Activated naive CD8-positive, alpha-beta T cell treated with anti-CD3 and anti-CD28 coated beads, Interleukin-2, amount 10 ng/mL, durations not matched to agents 7 days and 5 days (primary cell): ENCODE measurements at regions of chr14 and their contacts with region 1.

Region 1: DNA sequence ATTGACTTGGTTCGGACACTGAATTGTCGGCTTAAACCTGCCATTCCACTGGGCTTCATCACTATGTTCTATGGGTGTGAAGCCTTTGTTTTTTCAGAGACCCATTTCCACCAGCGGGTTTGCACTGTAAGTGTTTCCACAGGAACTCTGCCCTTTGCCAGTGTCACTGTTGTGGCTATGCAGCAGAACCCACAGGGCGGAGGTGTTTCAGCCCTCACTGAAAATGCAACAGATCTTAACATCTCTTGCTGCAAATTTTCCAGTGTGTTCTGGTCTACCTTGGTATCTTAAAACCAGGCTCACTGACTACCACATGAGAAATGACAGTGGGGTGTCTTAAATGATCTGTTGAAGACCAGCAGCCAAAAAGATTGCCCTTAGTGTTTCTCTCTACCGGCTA is 21.1 kb downstream of the PRKCH start:
- DNase-seq: peak; percentile 70
- ATAC-seq: peak; percentile 48
- H3K4me3 Mint-ChIP-seq: peak overlapping the region; percentile 84
- H3K27ac Mint-ChIP-seq: peak overlapping the region; percentile 97
- H3K4me1 Mint-ChIP-seq: peaks cover 89% of the 10 kb centered on the region
- H3K27me3 Mint-ChIP-seq: no peaks in the 10 kb centered on the region

Region 2: DNA sequence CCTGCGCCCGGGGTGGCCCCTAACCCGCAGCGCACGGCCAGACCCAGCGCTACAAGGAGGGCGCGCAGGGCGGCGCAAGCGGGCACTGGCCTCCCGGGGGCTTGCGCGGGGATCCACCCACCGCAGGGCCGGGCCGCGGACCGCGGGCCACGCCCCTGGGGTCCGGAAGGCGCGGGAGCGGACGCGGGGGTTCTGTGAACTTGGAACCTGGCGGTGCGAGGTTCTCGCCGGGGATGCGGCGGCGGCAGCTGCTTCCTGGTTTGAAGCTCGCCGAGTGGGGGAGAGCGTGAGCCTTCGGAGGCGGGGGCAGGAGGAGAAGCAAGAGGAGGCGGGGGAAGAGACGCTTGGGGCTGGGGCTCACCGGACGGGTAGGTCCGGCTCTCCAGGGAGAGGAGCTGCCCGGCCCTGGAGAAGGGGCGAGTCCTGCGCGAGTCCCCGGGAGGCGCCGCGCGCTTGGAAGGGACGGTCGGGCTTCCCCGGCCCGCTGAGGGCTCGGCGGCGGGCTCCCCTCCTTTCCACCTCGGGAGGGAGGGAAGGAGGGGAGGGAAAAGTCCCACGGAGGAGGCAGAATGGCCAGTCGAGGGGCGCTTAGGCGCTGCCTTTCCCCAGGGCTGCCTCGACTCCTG is 21.0 kb before region 1 on chr14 and contains the start of gene PRKCH:
- POLR2A ChIA-PET with region 1: interaction called, 188 read pairs
- DNase-seq: peak; percentile 87
- ATAC-seq: peak; percentile 75
- H3K4me3 Mint-ChIP-seq: peak within 1 kb of the TSS; percentile 99
- H3K27ac Mint-ChIP-seq: peak within 1 kb of the TSS; percentile 96
- H3K4me1 Mint-ChIP-seq: peaks cover 11% of the 10 kb centered on the region
- H3K27me3 Mint-ChIP-seq: no peaks in the 10 kb centered on the region
- total RNA-seq, gene PRKCH: 318 TPM

Region 3: DNA sequence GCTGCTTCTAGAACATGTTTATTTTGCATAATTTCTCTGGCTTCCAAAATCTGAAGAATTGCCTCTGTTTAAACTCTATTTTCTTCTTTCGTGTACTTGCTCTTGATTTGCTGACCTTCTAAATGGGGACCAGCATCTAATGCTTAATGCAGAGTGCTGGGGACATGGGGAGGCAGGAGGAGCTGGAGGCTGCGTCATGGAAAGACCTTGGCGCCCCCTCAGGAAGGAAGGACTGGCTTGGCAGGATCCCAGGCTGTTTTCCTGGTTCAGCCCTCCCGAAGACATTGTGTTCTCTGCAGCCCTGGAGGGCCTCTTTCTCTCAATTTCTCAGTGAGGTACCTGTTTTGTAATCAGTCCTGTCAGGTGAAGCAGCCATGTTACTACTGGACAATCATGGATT is 15.6 kb before region 1 on chr14:
- POLR2A ChIA-PET with region 1: interaction called, 188 read pairs
- DNase-seq: no peak
- ATAC-seq: no peak
- H3K4me3 Mint-ChIP-seq: peak overlapping the region; percentile 99
- H3K27ac Mint-ChIP-seq: peak overlapping the region; percentile 83
- H3K4me1 Mint-ChIP-seq: peaks cover 42% of the 10 kb centered on the region
- H3K27me3 Mint-ChIP-seq: no peaks in the 10 kb centered on the region

Region 4: GRCh38 chr14:61388173-61388975 is 45.9 kb after region 1 on chr14:
- POLR2A ChIA-PET with region 1: interaction called, 13 read pairs
- DNase-seq: peak; percentile 53
- ATAC-seq: peak; percentile 60
- H3K4me3 Mint-ChIP-seq: no peak overlapping the region
- H3K27ac Mint-ChIP-seq: no peak overlapping the region
- H3K4me1 Mint-ChIP-seq: peaks cover 40% of the 10 kb centered on the region
- H3K27me3 Mint-ChIP-seq: no peaks in the 10 kb centered on the region

Region 5: DNA sequence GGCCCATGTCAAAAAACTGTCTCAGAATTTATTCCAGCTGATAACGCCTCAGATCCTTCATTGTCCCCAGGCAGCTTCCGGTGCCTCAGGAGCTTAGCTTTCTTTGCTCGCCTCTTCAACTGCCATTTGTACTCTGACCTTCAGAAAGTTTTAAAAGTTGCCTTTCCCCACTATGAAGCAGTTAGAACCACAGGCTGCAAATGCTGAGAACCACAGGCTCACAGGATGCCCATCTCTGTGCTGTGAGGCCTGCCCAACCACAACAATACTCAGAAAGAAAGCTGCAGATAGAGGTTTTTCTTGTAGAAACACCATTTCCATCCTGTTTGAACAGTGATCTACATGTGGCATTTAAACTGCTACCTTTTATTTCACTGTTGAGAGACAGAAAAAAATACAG is 110.0 kb after region 1 on chr14:
- POLR2A ChIA-PET with region 1: interaction called, 10 read pairs
- DNase-seq: peak; percentile 59
- ATAC-seq: peak; percentile 83
- H3K4me3 Mint-ChIP-seq: peak overlapping the region; percentile 79
- H3K27ac Mint-ChIP-seq: peak overlapping the region; percentile 92
- H3K4me1 Mint-ChIP-seq: peaks cover 92% of the 10 kb centered on the region
- H3K27me3 Mint-ChIP-seq: no peaks in the 10 kb centered on the region